ENCODE measurements at regions of chr2 and their contacts with region 1.

Region 1: GRCh38 chr2:9356292-9356691 is 67.0 kb downstream of the ITGB1BP1 start:
- DNase-seq: no peak

Region 2: DNA sequence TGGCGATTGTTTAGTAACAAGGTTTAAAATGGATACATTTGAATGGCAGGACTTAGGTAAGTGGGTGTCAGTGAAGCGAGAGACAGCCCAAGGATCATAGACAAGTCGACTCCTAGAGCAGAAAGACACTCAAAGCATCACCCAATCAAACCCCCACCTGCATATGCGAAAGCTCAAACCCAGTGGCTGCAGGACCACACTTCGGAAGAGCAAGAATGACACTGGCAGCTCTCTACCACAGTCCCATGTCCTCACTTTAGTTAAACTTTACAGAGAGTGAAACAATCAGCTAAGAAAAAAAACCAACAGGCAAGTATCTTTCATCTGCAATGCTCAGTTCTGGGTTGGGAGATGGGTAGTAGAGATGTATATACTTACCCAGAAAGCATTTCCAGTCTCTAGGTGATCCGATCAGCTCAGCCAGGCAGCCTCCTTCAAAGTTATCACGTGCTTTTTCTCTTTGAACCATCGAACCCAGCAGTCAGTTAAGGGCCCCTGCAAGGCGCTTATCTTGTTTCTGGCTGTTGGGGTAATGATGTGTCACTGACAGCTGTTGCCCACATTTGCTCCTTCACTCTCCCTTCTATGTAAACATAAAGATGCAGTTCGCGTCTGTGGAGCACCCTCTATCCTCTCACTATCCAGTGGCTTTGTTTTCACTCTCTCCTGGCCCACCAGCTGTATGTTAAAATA is 1032.0 kb before region 1 on chr2:
- intact Hi-C with region 1: loop called in 1 of 2 experiments (anchors 10 kb)
- DNase-seq: no peak